Tibial artery (tissue), 4 donors: ENCODE measurements at regions of chr9 and their contacts with region 1.

Region 1: GRCh38 chr9:36632892-36633291 is 60.2 kb downstream of the MELK start:
- DNase-seq: no peak
- H3K4me3 ChIP-seq: no peak overlapping the region
- H3K27ac ChIP-seq: no peak overlapping the region
- H3K4me1 ChIP-seq: no peaks in the 10 kb centered on the region
- H3K27me3 ChIP-seq: no peaks in the 10 kb centered on the region
- CTCF ChIP-seq: peak; percentile 21 to 32

Region 2: DNA sequence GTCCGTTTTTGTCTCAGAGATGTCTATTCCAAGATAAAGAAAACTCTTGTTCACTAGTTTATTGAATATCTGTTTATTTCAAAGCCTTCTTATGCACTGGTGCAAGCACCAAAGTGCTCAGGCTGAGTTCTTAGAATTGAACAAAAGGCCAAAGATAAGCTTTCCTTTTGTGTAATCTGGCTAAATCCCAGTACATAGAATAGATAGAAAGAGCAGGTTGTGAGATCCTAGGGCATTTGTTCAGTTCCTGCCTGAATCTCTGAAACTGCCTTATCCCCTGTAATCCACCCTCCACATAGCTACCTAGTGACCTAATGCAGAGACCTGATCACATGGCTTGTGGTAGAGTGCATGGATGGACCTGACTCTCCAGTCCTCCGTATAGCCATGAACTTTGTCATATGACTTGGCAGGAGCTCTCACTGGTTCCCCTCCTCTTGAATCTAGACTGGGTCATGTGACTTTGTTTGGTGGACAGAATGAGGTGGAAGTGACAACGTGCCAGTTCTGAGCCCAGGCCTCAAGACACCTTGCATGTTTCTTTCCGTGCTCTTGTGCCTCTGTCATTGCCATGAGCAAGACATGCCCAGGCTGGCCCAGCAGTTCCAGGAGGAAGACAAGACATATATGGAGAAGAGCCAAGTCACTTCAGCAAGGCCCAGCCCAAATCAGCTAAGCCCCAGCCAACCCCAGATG is 1575.5 kb after region 1 on chr9:
- intact Hi-C with region 1: loop called (anchors 10 kb)
- DNase-seq: no peak
- H3K4me3 ChIP-seq: no peak overlapping the region
- H3K27ac ChIP-seq: no peak overlapping the region
- H3K4me1 ChIP-seq: no peaks in the 10 kb centered on the region
- H3K27me3 ChIP-seq: peaks cover 0 to under 1% of the 10 kb centered on the region in 2 donors
- CTCF ChIP-seq: no peak